ENCODE measurements at regions of chr17 and their contacts with region 1.

Region 1: DNA sequence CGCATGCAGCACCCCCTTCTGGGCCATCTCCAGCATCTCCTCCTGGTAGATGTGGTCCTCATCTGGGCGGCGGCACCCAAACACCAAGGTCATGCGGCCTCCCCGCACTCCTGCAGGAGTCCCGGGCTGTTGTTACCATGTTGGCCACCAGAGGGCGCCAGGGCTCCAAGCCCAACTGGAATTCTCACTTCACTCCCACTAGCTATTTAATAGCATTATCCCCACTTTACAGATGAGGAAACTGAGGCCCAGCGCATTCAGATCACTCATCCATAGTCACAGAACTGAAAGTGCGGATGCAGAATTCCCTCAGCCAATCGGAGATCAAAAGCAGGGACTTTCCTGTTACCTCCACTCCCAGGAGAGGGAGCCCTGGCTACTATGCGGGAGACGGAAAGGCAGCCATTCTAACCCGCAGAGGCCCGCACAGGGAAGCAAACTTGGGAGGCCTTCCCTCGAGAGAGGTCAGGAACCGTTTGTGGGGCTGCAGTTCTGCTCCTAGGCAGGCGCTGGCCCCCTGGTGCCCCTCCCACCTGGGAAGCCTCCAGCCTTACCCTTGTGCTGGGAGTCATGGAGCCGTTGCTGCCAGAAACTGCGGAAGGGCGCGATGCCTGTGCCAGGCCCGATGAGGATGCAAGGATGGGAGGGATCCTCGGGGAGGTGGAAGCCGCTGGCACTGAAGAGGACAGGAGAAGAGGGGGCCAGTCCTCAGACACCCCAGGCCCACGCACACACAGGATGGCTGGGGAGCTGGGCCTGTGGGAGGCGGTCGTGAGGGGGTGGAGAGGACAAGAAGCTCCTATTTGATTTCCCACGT is 40.1 kb downstream of the NOS2 start:
- DNase-seq: no peak
- H3K4me3 ChIP-seq: no peak overlapping the region
- H3K27ac ChIP-seq: no peak overlapping the region
- H3K4me1 ChIP-seq: no peaks in the 10 kb centered on the region
- H3K27me3 ChIP-seq: no peaks in the 10 kb centered on the region
- CTCF ChIP-seq: peak; percentile 66 to 91 (median 68)
- EP300 ChIP-seq: no peak
- POLR2A ChIP-seq: no peak

Region 2: GRCh38 chr17:27630607-27631410 is 129.5 kb before region 1 on chr17 and contains the start of gene LGALS9:
- intact Hi-C with region 1: no loop called
- DNase-seq: no peak
- H3K4me3 ChIP-seq: peak within 1 kb of the TSS; percentile 40 to 54 (median 42)
- H3K27ac ChIP-seq: peak within 1 kb of the TSS; percentile 43 to 65 (median 56)
- H3K4me1 ChIP-seq: peaks cover 28 to 33% (median 32%) of the 10 kb centered on the region in 4 donors
- H3K27me3 ChIP-seq: no peaks in the 10 kb centered on the region
- CTCF ChIP-seq: no peak
- EP300 ChIP-seq: no peak
- POLR2A ChIP-seq: no peak
- total RNA-seq, gene LGALS9: 17.0 to 31.8 (median 24.4) TPM

Region 3: GRCh38 chr17:27654654-27655524 is 105.4 kb before region 1 on chr17:
- intact Hi-C with region 1: loop called (anchors 5 kb)
- DNase-seq: no peak
- H3K4me3 ChIP-seq: no peak overlapping the region
- H3K27ac ChIP-seq: no peak overlapping the region
- H3K4me1 ChIP-seq: peaks cover 0 to 3% (median 0%) of the 10 kb centered on the region in 4 donors
- H3K27me3 ChIP-seq: peaks cover 0 to 10% (median 0%) of the 10 kb centered on the region in 4 donors
- CTCF ChIP-seq: peak; percentile 70 to 94 (median 73)
- EP300 ChIP-seq: no peak
- POLR2A ChIP-seq: no peak

Region 4: GRCh38 chr17:27677191-27677590 is 83.1 kb before region 1 on chr17:
- intact Hi-C with region 1: no loop called
- DNase-seq: no peak
- H3K4me3 ChIP-seq: no peak overlapping the region
- H3K27ac ChIP-seq: no peak overlapping the region
- H3K4me1 ChIP-seq: no peaks in the 10 kb centered on the region
- H3K27me3 ChIP-seq: no peaks in the 10 kb centered on the region
- CTCF ChIP-seq: no peak
- EP300 ChIP-seq: no peak
- POLR2A ChIP-seq: no peak

Region 5: DNA sequence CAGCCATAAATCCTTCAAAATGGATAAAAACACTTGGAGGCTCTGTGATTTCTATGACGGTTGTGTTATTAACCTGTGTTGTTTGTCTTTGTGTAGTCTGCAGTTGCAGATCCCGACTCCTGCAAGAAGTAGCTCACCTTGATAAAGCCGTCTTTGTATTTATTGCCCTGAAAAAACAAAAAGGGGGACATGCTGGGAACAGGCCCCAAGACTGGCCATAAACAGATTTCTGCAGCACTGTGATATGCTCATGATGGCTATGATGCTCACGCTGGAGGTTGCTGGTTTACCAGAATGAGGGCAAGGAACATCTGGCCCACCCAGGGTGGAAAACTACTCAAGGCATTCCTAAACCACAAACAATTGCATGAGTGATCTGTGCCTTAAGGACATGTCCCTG is 58.3 kb before region 1 on chr17:
- intact Hi-C with region 1: no loop called
- DNase-seq: no peak
- H3K4me3 ChIP-seq: no peak overlapping the region
- H3K27ac ChIP-seq: no peak overlapping the region
- H3K4me1 ChIP-seq: no peaks in the 10 kb centered on the region
- H3K27me3 ChIP-seq: no peaks in the 10 kb centered on the region
- CTCF ChIP-seq: no peak
- EP300 ChIP-seq: no peak
- POLR2A ChIP-seq: no peak

Region 6: GRCh38 chr17:27879987-27880608 is 119.8 kb after region 1 on chr17:
- intact Hi-C with region 1: loop called (anchors 5 kb)
- DNase-seq: no peak
- H3K4me3 ChIP-seq: no peak overlapping the region
- H3K27ac ChIP-seq: no peak overlapping the region
- H3K4me1 ChIP-seq: no peaks in the 10 kb centered on the region
- H3K27me3 ChIP-seq: no peaks in the 10 kb centered on the region
- CTCF ChIP-seq: peak; percentile 57 to 74 (median 68)
- EP300 ChIP-seq: no peak
- POLR2A ChIP-seq: no peak

Region 7: GRCh38 chr17:28460901-28461300 is 700.6 kb after region 1 on chr17:
- intact Hi-C with region 1: no loop called
- DNase-seq: peak; percentile 57
- H3K4me3 ChIP-seq: no peak overlapping the region
- H3K27ac ChIP-seq: no peak overlapping the region
- H3K4me1 ChIP-seq: no peaks in the 10 kb centered on the region
- H3K27me3 ChIP-seq: peaks cover 0 to 36% (median 3%) of the 10 kb centered on the region in 4 donors
- CTCF ChIP-seq: no peak
- EP300 ChIP-seq: no peak
- POLR2A ChIP-seq: no peak

Measured in esophagus muscularis mucosa (tissue), 4 donors.